HEK293 (cell line): ENCODE measurements at regions of chr17 and their contacts with region 1.

Region 1: GRCh38 chr17:41811549-41812380 is at the start of gene P3H4:
- H3K4me3 ChIP-seq: peak within 1 kb of the TSS; percentile 73
- H3K27ac ChIP-seq: peak within 1 kb of the TSS; percentile 89
- H3K4me1 ChIP-seq: 0 out of 2 replicates have a peak, but pooled peaks cover 8% of the 10 kb centered on the region
- CTCF ChIP-seq: peak; percentile 78

Region 2: GRCh38 chr17:41786227-41787020 is 25.3 kb before region 1 on chr17 and contains the start of gene JUP:
- CTCF ChIA-PET with region 1: interaction called, 6 read pairs
- POLR2A ChIA-PET with region 1: interaction called, 37 read pairs
- H3K4me3 ChIP-seq: peak within 1 kb of the TSS; percentile 61
- H3K27ac ChIP-seq: peak within 1 kb of the TSS; percentile 53; the same call in 1 of the 2 replicates
- H3K4me1 ChIP-seq: peaks cover 12% of the 10 kb centered on the region
- CTCF ChIP-seq: peak; percentile 40

Region 3: GRCh38 chr17:41824086-41824485 is 12.3 kb after region 1 on chr17:
- CTCF ChIA-PET with region 1: interaction called, 5 read pairs
- POLR2A ChIA-PET with region 1: interaction called, 25 read pairs
- H3K4me3 ChIP-seq: no peak overlapping the region
- H3K27ac ChIP-seq: no peak overlapping the region
- H3K4me1 ChIP-seq: no peaks in the 10 kb centered on the region
- CTCF ChIP-seq: no peak

Region 4: GRCh38 chr17:41864836-41865595 is 53.3 kb after region 1 on chr17 and contains the start of gene KLHL11:
- CTCF ChIA-PET with region 1: interaction called, 4 read pairs
- POLR2A ChIA-PET with region 1: interaction called, 25 read pairs
- H3K4me3 ChIP-seq: peak within 1 kb of the TSS; percentile 96
- H3K27ac ChIP-seq: peak within 1 kb of the TSS; percentile 91
- H3K4me1 ChIP-seq: peaks cover 21% of the 10 kb centered on the region
- CTCF ChIP-seq: no peak; the same call in 1 of the 2 replicates

Region 5: DNA sequence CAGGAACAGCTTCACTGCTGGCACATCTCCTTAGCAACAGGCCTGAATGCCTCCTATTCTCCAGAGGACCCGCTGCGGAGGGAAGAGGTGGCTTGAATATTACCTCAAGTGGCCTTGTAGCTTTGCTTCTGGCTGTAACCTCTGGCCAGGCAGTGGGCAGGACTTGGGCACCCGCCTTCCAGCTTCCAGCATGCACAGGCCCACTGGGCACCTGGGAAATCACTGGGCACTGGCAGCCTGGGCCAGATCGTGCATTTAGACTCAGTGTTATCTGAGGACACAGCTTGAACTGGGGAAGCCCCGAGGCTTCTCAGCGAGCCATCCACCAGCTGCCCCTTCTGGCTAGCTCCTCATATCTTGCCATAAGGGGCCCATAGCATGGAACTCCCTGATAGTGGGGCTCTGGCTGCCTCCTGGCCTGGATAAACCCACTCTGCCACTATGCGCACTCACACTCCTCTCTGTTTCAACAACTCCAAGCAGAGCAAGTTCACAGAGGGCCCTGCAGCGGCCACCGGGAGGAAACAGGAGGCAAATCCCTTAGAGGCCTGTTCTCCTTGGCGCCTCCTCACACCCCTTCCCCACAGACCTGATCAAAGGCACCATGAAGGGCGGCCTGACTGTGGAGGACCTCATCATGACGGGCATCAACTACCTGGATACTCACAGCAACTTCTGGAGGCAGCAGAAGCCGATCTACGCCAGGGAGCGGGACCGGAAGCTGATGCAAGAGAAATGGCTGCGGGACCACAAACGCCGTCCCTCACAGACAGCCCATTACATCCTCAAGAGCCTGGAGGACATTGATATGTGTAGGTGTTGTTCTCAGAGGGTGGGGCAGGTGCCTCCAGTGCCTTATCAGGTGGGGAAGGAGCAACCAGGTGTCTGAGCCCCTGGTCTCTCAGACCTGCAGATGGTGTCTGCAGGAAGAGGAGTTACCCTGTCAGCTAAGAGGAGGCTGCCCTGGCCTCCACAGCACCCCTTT is 126.5 kb after region 1 on chr17:
- CTCF ChIA-PET with region 1: no interaction called
- POLR2A ChIA-PET with region 1: no interaction called
- H3K4me3 ChIP-seq: no peak overlapping the region
- H3K27ac ChIP-seq: no peak overlapping the region
- H3K4me1 ChIP-seq: no peaks in the 10 kb centered on the region
- CTCF ChIP-seq: no peak